ENCODE measurements at regions of chr16 and their contacts with region 1.

Region 1: DNA sequence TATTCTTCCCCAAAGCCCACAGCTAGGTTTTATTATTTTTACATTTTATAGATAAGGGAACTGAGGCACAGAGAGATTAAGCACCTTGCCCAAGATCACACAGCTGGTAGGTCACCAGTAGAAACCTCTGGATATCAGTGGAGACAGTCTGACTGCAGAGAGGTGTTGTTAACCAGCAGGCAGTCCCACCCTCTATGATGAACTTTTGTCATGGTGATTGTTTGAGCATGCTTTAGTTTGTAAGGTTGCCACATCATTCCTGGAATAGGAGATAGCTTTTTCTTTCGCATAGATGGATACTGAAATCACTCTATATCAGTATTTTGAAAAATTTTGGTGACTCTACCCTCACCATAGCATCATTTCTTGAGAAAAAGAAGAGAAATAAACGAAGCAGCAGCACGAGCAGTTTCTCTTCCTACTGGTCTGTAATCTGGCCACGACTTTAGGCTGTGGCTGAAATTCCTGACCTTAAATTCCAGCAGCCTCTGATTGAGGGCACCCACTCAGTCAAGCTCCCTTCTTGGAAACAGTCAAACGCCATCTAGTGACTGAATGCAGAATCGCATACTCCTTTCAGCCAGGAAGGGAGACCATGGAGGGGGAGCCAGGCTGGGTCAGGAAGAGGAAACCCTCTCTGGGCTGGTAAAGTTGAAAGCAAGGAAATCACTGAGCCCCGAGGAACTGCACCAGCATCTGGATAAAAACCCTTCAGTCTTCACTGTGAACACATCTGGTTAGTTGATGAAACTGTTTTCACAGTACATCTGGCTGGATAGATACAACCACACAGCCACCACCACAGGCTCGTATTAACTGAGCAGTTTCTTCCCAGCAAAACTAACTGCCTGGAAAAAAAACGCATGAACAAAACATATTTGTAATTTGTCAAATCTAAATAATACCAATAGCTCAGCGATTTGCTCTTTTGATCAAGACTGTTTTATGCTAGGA is 108.4 kb upstream of the XYLT1 start:
- DNase-seq: peak; percentile 18 to 80 (median 57)
- ATAC-seq: peak; percentile 71
- H3K4me3 ChIP-seq: no peak overlapping the region
- H3K4me3 Mint-ChIP-seq: no peak overlapping the region
- H3K27ac ChIP-seq: no peak overlapping the region
- H3K27ac Mint-ChIP-seq: no peak overlapping the region
- H3K4me1 ChIP-seq: no peaks in the 10 kb centered on the region
- H3K4me1 Mint-ChIP-seq: peaks cover 3% of the 10 kb centered on the region
- H3K27me3 ChIP-seq: no peaks in the 10 kb centered on the region
- H3K27me3 Mint-ChIP-seq: peaks cover 6% of the 10 kb centered on the region
- CTCF ChIP-seq: peak; percentile 84

Region 2: DNA sequence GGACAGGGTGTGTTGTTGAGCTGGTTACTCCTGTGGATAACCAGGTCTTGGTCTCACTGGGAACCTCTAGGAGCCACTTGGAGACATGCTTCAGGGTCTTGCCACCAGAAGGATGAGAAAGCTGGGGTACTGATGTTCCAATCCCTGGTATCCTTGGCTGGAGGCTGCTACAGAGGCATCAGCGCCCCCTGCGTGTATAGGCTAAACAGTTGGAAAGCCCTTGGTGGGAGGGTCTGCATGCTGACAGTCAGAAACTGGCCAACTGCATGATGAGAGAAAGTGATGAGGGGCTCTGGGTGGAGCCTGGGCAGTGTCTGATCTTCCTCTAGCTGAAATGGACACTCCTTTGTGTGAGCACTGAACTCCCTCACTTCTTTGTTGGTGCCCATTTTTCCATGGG is 645.3 kb before region 1 on chr16:
- CTCF ChIA-PET with region 1: no interaction called
- POLR2A ChIA-PET with region 1: no interaction called
- intact Hi-C with region 1: no loop called
- DNase-seq: no peak
- ATAC-seq: no peak
- H3K4me3 ChIP-seq: no peak overlapping the region
- H3K4me3 Mint-ChIP-seq: no peak overlapping the region
- H3K27ac ChIP-seq: no peak overlapping the region
- H3K27ac Mint-ChIP-seq: no peak overlapping the region
- H3K4me1 ChIP-seq: no peaks in the 10 kb centered on the region
- H3K4me1 Mint-ChIP-seq: no peaks in the 10 kb centered on the region
- H3K27me3 ChIP-seq: no peaks in the 10 kb centered on the region
- H3K27me3 Mint-ChIP-seq: peaks cover 5% of the 10 kb centered on the region
- CTCF ChIP-seq: no peak

Region 3: GRCh38 chr16:17194190-17194780 is 384.9 kb before region 1 on chr16:
- CTCF ChIA-PET with region 1: interaction called, 13 read pairs
- POLR2A ChIA-PET with region 1: no interaction called
- intact Hi-C with region 1: loop called (anchors 1 to 5 kb)
- DNase-seq: peak; percentile 19 to 78 (median 67)
- ATAC-seq: no peak
- H3K4me3 ChIP-seq: no peak overlapping the region
- H3K4me3 Mint-ChIP-seq: no peak overlapping the region
- H3K27ac ChIP-seq: no peak overlapping the region
- H3K27ac Mint-ChIP-seq: no peak overlapping the region
- H3K4me1 ChIP-seq: no peaks in the 10 kb centered on the region
- H3K4me1 Mint-ChIP-seq: no peaks in the 10 kb centered on the region
- H3K27me3 ChIP-seq: no peaks in the 10 kb centered on the region
- H3K27me3 Mint-ChIP-seq: no peaks in the 10 kb centered on the region
- CTCF ChIP-seq: peak; percentile 61

Region 4: GRCh38 chr16:17211797-17212196 is 367.4 kb before region 1 on chr16:
- CTCF ChIA-PET with region 1: interaction called, 10 read pairs
- POLR2A ChIA-PET with region 1: interaction called, 3 read pairs
- intact Hi-C with region 1: loop called (anchors 1 to 5 kb)
- DNase-seq: peak in 7 of 9 experiments; percentile 4 to 64 (median 41)
- ATAC-seq: peak; percentile 56
- H3K4me3 ChIP-seq: no peak overlapping the region
- H3K4me3 Mint-ChIP-seq: no peak overlapping the region
- H3K27ac ChIP-seq: no peak overlapping the region
- H3K27ac Mint-ChIP-seq: no peak overlapping the region
- H3K4me1 ChIP-seq: peaks cover 22% of the 10 kb centered on the region
- H3K4me1 Mint-ChIP-seq: peaks cover 19% of the 10 kb centered on the region
- H3K27me3 ChIP-seq: no peaks in the 10 kb centered on the region
- H3K27me3 Mint-ChIP-seq: no peaks in the 10 kb centered on the region
- CTCF ChIP-seq: peak; percentile 48

Region 5: GRCh38 chr16:17343028-17343427 is 236.2 kb before region 1 on chr16:
- CTCF ChIA-PET with region 1: interaction called, 4 read pairs
- POLR2A ChIA-PET with region 1: no interaction called
- intact Hi-C with region 1: loop called in 1 of 2 experiments (anchors 5 kb)
- DNase-seq: peak; percentile 18 to 88 (median 50)
- ATAC-seq: peak; percentile 82
- H3K4me3 ChIP-seq: peak overlapping the region in 1 of 2 experiments; percentile 9
- H3K4me3 Mint-ChIP-seq: peak overlapping the region; percentile 38
- H3K27ac ChIP-seq: no peak overlapping the region
- H3K27ac Mint-ChIP-seq: peak overlapping the region; percentile 49
- H3K4me1 ChIP-seq: peaks cover 61% of the 10 kb centered on the region
- H3K4me1 Mint-ChIP-seq: peaks cover 66% of the 10 kb centered on the region
- H3K27me3 ChIP-seq: no peaks in the 10 kb centered on the region
- H3K27me3 Mint-ChIP-seq: no peaks in the 10 kb centered on the region
- CTCF ChIP-seq: no peak

Region 6: GRCh38 chr16:17476414-17477270 is 102.6 kb before region 1 on chr16:
- CTCF ChIA-PET with region 1: interaction called, 8 read pairs
- POLR2A ChIA-PET with region 1: no interaction called
- intact Hi-C with region 1: loop called (anchors 2 to 10 kb)
- DNase-seq: peak in 7 of 9 experiments; percentile 18 to 73 (median 52)
- ATAC-seq: peak; percentile 76
- H3K4me3 ChIP-seq: no peak overlapping the region
- H3K4me3 Mint-ChIP-seq: no peak overlapping the region
- H3K27ac ChIP-seq: no peak overlapping the region
- H3K27ac Mint-ChIP-seq: no peak overlapping the region
- H3K4me1 ChIP-seq: peaks cover 11% of the 10 kb centered on the region
- H3K4me1 Mint-ChIP-seq: peaks cover 27% of the 10 kb centered on the region
- H3K27me3 ChIP-seq: no peaks in the 10 kb centered on the region
- H3K27me3 Mint-ChIP-seq: peaks cover 13% of the 10 kb centered on the region
- CTCF ChIP-seq: peak; percentile 34

Region 7: DNA sequence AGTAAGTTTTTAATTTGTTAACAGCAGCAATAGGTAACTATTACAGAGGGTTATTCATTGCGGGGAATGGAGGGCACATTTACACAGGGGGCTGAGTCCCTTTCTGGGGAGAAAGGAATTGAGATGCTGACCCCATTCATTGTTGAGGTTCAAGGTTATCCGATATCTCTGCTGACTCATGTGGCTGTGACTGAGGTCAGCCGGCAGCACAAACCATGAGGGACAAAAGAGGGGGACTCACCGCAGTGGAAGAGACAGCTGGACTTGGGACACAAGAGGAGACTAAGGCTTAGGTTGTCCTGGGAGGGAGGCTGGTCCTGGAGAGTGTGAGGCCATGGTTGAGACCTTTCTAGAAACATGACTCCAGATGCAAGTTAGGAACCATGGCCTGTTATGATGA is 10.7 kb after region 1 on chr16:
- CTCF ChIA-PET with region 1: interaction called, 25 read pairs
- POLR2A ChIA-PET with region 1: interaction called, 3 read pairs
- intact Hi-C with region 1: no loop called
- DNase-seq: no peak
- ATAC-seq: no peak
- H3K4me3 ChIP-seq: no peak overlapping the region
- H3K4me3 Mint-ChIP-seq: no peak overlapping the region
- H3K27ac ChIP-seq: no peak overlapping the region
- H3K27ac Mint-ChIP-seq: no peak overlapping the region
- H3K4me1 ChIP-seq: no peaks in the 10 kb centered on the region
- H3K4me1 Mint-ChIP-seq: no peaks in the 10 kb centered on the region
- H3K27me3 ChIP-seq: no peaks in the 10 kb centered on the region
- H3K27me3 Mint-ChIP-seq: peaks cover 10% of the 10 kb centered on the region
- CTCF ChIP-seq: no peak

Region 8: DNA sequence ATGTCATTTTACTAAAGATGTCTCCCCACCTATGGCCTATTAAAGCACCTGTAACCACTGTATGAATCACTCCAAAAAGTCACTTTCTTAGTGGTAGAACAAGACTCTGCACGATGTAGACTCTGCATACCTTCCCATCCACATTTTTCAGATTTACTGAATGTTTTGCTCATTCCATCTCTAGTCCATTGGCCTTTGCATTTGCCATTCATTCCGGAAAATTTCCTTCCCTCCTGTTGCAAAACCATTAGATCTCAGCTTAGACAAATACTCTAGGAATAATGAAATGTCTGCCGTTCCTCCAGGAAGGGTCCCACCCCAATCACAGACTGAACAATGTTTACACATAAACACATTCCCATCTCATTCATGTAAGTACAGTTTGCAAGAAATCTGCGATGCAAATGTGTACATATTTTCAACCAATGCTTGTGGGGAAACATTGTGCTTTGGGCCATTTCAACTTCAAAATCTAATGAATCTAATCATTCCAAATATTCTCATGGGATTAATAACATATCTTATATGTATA is 37.9 kb after region 1 on chr16:
- CTCF ChIA-PET with region 1: no interaction called
- POLR2A ChIA-PET with region 1: no interaction called
- intact Hi-C with region 1: no loop called
- DNase-seq: no peak
- ATAC-seq: no peak
- H3K4me3 ChIP-seq: no peak overlapping the region
- H3K4me3 Mint-ChIP-seq: no peak overlapping the region
- H3K27ac ChIP-seq: no peak overlapping the region
- H3K27ac Mint-ChIP-seq: no peak overlapping the region
- H3K4me1 ChIP-seq: no peaks in the 10 kb centered on the region
- H3K4me1 Mint-ChIP-seq: no peaks in the 10 kb centered on the region
- H3K27me3 ChIP-seq: no peaks in the 10 kb centered on the region
- H3K27me3 Mint-ChIP-seq: peaks cover 14% of the 10 kb centered on the region
- CTCF ChIP-seq: no peak